ENCODE measurements at regions of chr10 and their contacts with region 1.

Region 1: GRCh38 chr10:43606322-43607198 is at the start of gene ZNF485:
- DNase-seq: peak; percentile 66 to 71
- H3K4me3 ChIP-seq: peak within 1 kb of the TSS; percentile 68 to 73 (median 68)
- H3K27ac ChIP-seq: peak within 1 kb of the TSS in 2 of 3 donors; percentile 32 to 58
- H3K4me1 ChIP-seq: peaks cover 0 to 3% of the 10 kb centered on the region in 2 donors
- H3K27me3 ChIP-seq: no peaks in the 10 kb centered on the region
- CTCF ChIP-seq: no peak
- POLR2A ChIP-seq: peak in 1 of 2 donors; percentile 41
- total RNA-seq, gene ZNF485: 1.5 to 3.3 (median 2.2) TPM

Region 2: GRCh38 chr10:43574001-43574892 is 32.3 kb before region 1 on chr10 and contains the start of gene ZNF239:
- intact Hi-C with region 1: loop called (anchors 5 kb)
- DNase-seq: peak; percentile 86 to 89
- H3K4me3 ChIP-seq: peak within 1 kb of the TSS; percentile 27 to 72 (median 44)
- H3K27ac ChIP-seq: peak within 1 kb of the TSS in 2 of 3 donors; percentile 66 to 67
- H3K4me1 ChIP-seq: peaks cover 0 to 7% of the 10 kb centered on the region in 2 donors
- H3K27me3 ChIP-seq: no peaks in the 10 kb centered on the region
- CTCF ChIP-seq: no peak
- POLR2A ChIP-seq: peak in 1 of 2 donors; percentile 38
- total RNA-seq, gene ZNF239: 4.8 to 8.7 (median 6.6) TPM

Region 3: DNA sequence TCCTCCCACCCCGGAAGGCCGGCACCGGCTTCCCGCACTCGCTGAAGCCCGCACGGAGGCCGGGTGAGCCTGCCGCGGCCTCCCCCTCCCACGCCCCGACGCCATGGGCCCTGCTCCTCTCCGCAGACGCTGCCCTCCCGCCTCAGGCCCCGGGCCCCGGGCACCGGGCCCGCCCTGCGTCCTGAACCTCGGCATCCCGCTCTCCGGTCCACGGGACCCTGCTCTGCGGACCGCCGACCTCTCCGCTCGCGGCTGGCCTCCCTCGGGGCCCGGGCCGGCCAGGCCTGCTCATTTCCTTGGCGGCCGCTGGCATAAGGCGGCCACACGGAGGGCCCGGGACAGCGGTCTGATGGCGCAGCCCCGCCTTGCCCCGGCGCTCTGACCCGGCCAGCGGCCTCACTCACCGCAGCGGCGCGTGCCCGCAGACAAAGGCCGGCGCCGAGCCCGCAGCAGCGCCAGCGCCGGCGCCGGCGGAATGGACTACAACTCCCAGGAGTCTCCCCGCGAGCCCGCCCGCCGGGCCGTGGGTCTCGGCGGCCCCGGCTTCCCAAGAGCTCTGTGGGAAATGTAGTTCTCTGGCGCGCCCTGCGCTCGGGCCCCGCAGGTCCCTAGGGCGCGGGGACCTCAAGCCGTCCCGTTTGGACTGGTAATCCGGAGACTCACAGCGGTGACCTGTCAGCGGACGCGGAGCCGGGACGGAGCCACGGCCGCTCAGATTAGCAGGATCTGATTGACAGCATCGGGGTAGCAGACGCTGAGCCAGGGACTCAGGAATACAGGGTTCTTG is 42.0 kb after region 1 on chr10 and contains the start of gene ZNF32:
- intact Hi-C with region 1: loop called (anchors 5 kb)
- DNase-seq: peak; percentile 79 to 83
- H3K4me3 ChIP-seq: peak within 1 kb of the TSS; percentile 69 to 82 (median 82)
- H3K27ac ChIP-seq: peak within 1 kb of the TSS; percentile 55 to 86 (median 60)
- H3K4me1 ChIP-seq: peaks cover 3 to 9% of the 10 kb centered on the region in 2 donors
- H3K27me3 ChIP-seq: no peaks in the 10 kb centered on the region
- CTCF ChIP-seq: no peak
- POLR2A ChIP-seq: peak in 1 of 2 donors; percentile 62
- total RNA-seq, gene ZNF32: 28.9 to 63.3 (median 48.4) TPM

Measured in thyroid gland (tissue), 4 donors.